Aorta (tissue), 5 donors: ENCODE measurements at regions of chr10 and their contacts with region 1.

Region 1: GRCh38 chr10:129466703-129467358 is at the start of gene MGMT:
- DNase-seq: peak; percentile 97 to 99
- ATAC-seq: peak; percentile 98
- H3K4me3 ChIP-seq: peak within 1 kb of the TSS; percentile 36 to 38
- H3K27ac ChIP-seq: peak within 1 kb of the TSS in 1 of 2 donors; percentile 70
- H3K4me1 ChIP-seq: no peaks in the 10 kb centered on the region
- H3K27me3 ChIP-seq: no peaks in the 10 kb centered on the region
- total RNA-seq, gene MGMT: 13.4 to 30.0 TPM

Region 2: DNA sequence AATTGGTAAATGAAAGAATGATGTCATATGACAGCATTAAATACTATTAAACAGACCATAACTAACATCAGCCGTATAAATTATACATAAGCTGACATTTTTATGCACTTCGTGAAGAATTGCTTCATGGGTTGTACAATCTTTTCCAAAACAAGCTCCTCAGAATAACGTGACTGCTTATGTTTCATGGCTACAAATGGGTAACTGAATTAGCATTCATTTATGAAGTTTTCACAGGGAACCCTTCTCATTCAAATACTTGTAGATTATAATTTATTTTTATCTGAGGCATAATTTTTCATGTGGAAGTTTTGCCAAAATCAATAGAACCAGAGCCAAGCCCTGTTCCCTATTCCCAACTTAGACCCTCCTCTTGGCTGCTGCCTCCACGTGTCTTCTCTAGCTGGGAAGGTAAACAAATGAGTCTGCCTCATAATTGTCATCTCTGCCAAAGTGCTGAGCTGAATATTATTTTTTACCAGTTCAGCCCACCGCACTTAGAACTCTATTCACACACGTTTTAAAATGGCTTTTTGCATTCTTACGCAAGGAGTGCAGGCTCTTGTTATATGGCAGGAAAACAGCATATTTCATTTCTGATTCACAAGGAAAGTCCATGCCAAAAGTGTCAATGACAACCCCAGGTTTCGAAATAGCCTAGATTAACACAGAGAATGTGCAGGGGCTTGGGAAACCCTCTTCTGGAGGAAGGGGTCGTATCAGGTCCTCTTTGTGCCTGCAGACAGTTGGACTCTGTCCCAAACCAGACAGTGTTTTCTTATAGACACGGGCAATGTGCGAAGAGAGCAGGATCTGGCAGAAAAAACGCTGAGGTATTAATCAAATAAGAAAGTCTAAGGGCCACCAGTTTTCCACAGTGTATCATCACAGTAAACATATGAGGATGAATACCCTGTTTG is 370.5 kb before region 1 on chr10:
- intact Hi-C with region 1: loop called in 1 of 2 experiments (anchors 10 kb)
- DNase-seq: peak in 1 of 2 donors; percentile 80
- ATAC-seq: peak; percentile 90
- H3K4me3 ChIP-seq: no peak overlapping the region
- H3K27ac ChIP-seq: no peak overlapping the region
- H3K4me1 ChIP-seq: peaks cover 0 to 8% of the 10 kb centered on the region in 2 donors
- H3K27me3 ChIP-seq: no peaks in the 10 kb centered on the region

Region 3: GRCh38 chr10:129305046-129305445 is 161.8 kb before region 1 on chr10:
- intact Hi-C with region 1: no loop called
- DNase-seq: no peak
- ATAC-seq: no peak
- H3K4me3 ChIP-seq: no peak overlapping the region
- H3K27ac ChIP-seq: no peak overlapping the region
- H3K4me1 ChIP-seq: peaks cover 0 to 6% of the 10 kb centered on the region in 2 donors
- H3K27me3 ChIP-seq: no peaks in the 10 kb centered on the region

Region 4: GRCh38 chr10:129410688-129411392 is 56.0 kb before region 1 on chr10:
- intact Hi-C with region 1: no loop called
- DNase-seq: no peak
- ATAC-seq: no peak
- H3K4me3 ChIP-seq: no peak overlapping the region
- H3K27ac ChIP-seq: no peak overlapping the region
- H3K4me1 ChIP-seq: no peaks in the 10 kb centered on the region
- H3K27me3 ChIP-seq: peaks cover 0 to 1% of the 10 kb centered on the region in 2 donors